H1 (cell line): ENCODE measurements at regions of chr6 and their contacts with region 1.

Region 1: GRCh38 chr6:11595903-11596302 is 58.4 kb downstream of the TMEM170B start:
- DNase-seq: no peak
- H3K4me3 ChIP-seq: no peak overlapping the region
- H3K27ac ChIP-seq: no peak overlapping the region; the same call in 1 of the 2 replicates
- H3K4me1 ChIP-seq: peaks cover 0 to 2% (median 0%) of the 10 kb centered on the region in 4 experiments; a peak in 1 of 7 replicates
- H3K27me3 ChIP-seq: no peaks in the 10 kb centered on the region
- CTCF ChIP-seq: peak in 2 of 3 experiments; percentile 35 to 59; a peak in 2 of 4 replicates
- EP300 ChIP-seq: no peak
- POLR2A ChIP-seq: no peak
- RAD21 ChIP-seq: peak in 1 of 2 experiments; percentile 31; a peak in 3 of 4 replicates

Region 2: DNA sequence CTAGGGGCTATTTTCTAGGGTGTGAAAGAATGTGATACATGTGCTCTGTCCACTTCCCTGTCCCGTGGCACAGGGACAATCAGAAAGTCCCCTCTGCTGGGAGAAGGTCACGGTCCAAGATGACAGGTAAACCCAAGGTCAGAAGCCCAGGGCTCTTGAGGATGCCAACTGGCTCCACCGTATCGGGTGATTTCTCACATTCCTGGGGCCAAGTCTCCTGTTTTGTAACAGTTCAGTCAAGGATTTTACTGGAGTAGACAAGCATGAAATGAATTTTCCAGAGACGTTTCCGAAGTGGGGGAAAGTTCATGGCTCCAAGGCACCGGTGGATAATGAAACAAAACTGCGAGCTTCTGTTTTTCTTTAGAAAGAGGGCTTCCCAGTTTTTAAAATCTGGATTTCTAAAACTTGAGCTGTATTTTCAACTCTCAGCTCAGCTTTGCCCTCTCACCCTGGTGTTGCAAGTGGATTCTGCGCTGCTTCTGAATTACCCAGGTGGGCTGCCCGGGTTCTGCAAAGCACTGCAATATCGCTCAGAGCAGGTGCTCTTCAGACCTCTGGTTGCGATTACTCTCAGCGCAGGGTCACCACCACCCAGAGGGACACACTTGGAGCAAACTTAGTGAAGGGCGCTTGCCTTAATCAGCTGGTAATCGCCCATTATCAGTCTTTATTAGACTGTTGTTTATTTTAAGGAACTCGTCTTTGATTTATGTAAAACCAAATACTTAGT is 122.7 kb before region 1 on chr6:
- CTCF ChIA-PET with region 1: no interaction called
- POLR2A ChIA-PET with region 1: no interaction called
- DNase-seq: no peak
- H3K4me3 ChIP-seq: no peak overlapping the region
- H3K27ac ChIP-seq: no peak overlapping the region
- H3K4me1 ChIP-seq: no peaks in the 10 kb centered on the region
- H3K27me3 ChIP-seq: no peaks in the 10 kb centered on the region
- CTCF ChIP-seq: no peak
- EP300 ChIP-seq: no peak
- POLR2A ChIP-seq: no peak
- RAD21 ChIP-seq: no peak

Region 3: GRCh38 chr6:11609315-11610071 is 13.6 kb after region 1 on chr6:
- CTCF ChIA-PET with region 1: interaction called, 17 read pairs
- POLR2A ChIA-PET with region 1: no interaction called
- DNase-seq: peak in 1 of 2 experiments; percentile 29
- H3K4me3 ChIP-seq: no peak overlapping the region
- H3K27ac ChIP-seq: no peak overlapping the region
- H3K4me1 ChIP-seq: peaks cover 0 to 3% (median 1%) of the 10 kb centered on the region in 4 experiments; a peak in 5 of 7 replicates
- H3K27me3 ChIP-seq: no peaks in the 10 kb centered on the region
- CTCF ChIP-seq: no peak
- EP300 ChIP-seq: no peak
- POLR2A ChIP-seq: no peak
- RAD21 ChIP-seq: no peak

Region 4: DNA sequence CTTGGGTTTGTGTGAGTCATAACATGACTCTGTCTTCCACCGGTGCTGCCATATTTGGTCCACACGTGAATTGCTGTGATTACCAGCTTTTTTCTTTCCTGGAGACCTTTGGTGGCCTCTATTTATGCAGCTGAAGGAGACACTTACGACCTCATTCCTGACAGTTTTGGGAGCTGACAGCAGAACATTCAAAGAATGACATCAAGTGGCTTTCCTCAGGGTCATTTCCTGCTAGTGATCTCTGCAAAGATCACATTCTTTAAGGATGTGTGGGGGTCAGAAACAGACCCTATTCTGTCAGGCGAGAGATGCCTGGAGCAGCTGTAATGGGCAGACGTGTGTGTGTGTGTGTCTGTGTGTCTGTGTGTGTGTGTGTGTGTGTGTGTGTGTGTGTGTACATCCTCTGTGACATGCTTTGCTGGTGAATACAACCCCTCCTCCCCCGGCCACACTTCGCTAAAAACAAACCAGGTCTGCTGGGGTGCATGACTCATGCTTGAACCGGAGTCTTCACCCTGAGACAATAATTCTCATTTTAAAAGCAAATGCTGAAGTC is 57.2 kb after region 1 on chr6:
- CTCF ChIA-PET with region 1: interaction called, 11 read pairs
- POLR2A ChIA-PET with region 1: no interaction called
- DNase-seq: peak in 1 of 2 experiments; percentile 29
- H3K4me3 ChIP-seq: no peak overlapping the region
- H3K27ac ChIP-seq: no peak overlapping the region
- H3K4me1 ChIP-seq: peaks cover 8 to 35% (median 19%) of the 10 kb centered on the region in 4 experiments; a peak in 6 of 7 replicates
- H3K27me3 ChIP-seq: no peaks in the 10 kb centered on the region; a peak in 1 of 7 replicates
- CTCF ChIP-seq: no peak
- EP300 ChIP-seq: no peak
- POLR2A ChIP-seq: no peak
- RAD21 ChIP-seq: no peak